K562 (cell line): ENCODE measurements at regions of chr5 and their contacts with region 1.

Region 1: DNA sequence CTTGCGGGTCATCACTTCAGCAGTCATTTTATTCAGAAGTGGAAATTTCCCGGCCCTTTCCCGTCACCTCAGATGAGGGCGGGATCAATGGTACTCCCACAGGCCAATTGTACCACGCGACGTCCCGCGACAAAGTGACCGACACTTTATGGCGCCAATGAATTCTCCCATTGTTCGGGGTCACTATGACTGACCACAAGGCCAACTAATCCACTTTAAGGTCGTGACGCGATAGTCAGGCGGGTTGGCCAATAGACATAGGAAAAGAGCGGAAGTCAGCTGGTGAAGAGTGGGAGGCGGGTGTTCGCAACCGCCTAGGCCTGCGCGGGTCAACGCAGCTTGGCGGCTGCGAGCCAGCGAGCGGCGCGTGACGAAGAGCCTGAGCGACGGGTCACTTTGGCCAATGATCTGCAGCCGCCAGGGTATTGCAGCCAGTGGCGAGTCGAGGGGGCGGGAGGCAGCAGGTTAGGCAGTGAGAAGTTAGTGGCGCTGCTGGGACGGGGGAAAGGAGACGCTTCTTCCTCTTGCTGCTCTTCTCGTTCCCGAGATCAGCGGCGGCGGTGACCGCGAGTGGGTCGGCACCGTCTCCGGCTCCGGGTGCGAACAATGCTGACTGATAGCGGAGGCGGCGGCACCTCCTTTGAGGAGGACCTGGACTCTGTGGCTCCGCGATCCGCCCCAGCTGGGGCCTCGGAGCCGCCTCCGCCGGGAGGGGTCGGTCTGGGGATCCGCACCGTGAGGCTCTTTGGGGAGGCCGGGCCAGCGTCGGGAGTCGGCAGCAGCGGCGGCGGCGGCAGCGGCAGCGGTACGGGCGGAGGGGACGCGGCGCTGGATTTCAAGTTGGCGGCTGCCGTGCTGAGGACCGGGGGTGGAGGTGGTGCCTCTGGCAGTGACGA is at the start of gene ANKHD1:
- DNase-seq: peak; percentile 91 to 100 (median 94)
- ATAC-seq: peak; percentile 83
- H3K4me3 ChIP-seq: peak within 1 kb of the TSS; percentile 100
- H3K27ac ChIP-seq: peak within 1 kb of the TSS; percentile 97
- H3K4me1 ChIP-seq: peaks cover 12 to 18% of the 10 kb centered on the region in 2 experiments; a peak in 4 of 5 replicates
- H3K27me3 ChIP-seq: no peaks in the 10 kb centered on the region
- CTCF ChIP-seq: peak in 1 of 3 experiments; percentile 15; a peak in 1 of 6 replicates
- EP300 ChIP-seq: no peak
- POLR2A ChIP-seq: peak; percentile 90
- RAD21 ChIP-seq: no peak; a peak in 1 of 4 replicates
- polyA plus RNA-seq, gene ANKHD1: 38.9 to 39.0 TPM

Region 2: GRCh38 chr5:140295414-140295813 is 106.2 kb before region 1 on chr5:
- CTCF ChIA-PET with region 1: no interaction called
- POLR2A ChIA-PET with region 1: no interaction called
- in situ Hi-C with region 1: no loop called
- intact Hi-C with region 1: no loop called
- DNase-seq: peak in 1 of 4 experiments; percentile 71
- ATAC-seq: peak; percentile 73
- H3K4me3 ChIP-seq: no peak overlapping the region
- H3K27ac ChIP-seq: no peak overlapping the region
- H3K4me1 ChIP-seq: peaks cover 0 to 9% of the 10 kb centered on the region in 2 experiments; a peak in 3 of 5 replicates
- H3K27me3 ChIP-seq: no peaks in the 10 kb centered on the region
- CTCF ChIP-seq: no peak
- EP300 ChIP-seq: no peak
- POLR2A ChIP-seq: no peak
- RAD21 ChIP-seq: peak in 1 of 2 experiments; percentile 20; a peak in 1 of 4 replicates

Region 3: DNA sequence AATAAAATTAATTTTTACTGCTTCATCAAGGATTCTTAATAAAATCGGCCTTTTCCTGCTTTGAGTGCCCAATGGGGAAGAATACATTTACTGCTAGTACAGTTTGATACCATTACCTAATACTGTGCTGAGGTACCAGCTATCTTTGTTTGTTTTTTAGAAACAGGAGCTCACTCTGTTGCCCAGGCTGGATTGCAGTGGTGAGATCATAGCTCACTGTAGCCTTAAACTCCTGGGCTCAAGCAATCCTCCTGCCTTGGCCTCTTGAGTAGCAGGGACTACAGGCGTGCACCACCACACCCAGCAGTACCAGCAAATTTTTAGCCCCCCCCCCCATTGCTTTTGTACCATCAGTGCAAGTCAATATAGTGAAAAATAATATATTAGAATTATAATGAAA is 13.6 kb before region 1 on chr5:
- CTCF ChIA-PET with region 1: no interaction called
- POLR2A ChIA-PET with region 1: interaction called, 14 read pairs
- in situ Hi-C with region 1: no loop called
- intact Hi-C with region 1: no loop called
- DNase-seq: no peak
- ATAC-seq: no peak
- H3K4me3 ChIP-seq: no peak overlapping the region
- H3K27ac ChIP-seq: no peak overlapping the region
- H3K4me1 ChIP-seq: no peaks in the 10 kb centered on the region; a peak in 1 of 5 replicates
- H3K27me3 ChIP-seq: no peaks in the 10 kb centered on the region
- CTCF ChIP-seq: no peak
- EP300 ChIP-seq: no peak
- POLR2A ChIP-seq: no peak
- RAD21 ChIP-seq: no peak

Region 4: DNA sequence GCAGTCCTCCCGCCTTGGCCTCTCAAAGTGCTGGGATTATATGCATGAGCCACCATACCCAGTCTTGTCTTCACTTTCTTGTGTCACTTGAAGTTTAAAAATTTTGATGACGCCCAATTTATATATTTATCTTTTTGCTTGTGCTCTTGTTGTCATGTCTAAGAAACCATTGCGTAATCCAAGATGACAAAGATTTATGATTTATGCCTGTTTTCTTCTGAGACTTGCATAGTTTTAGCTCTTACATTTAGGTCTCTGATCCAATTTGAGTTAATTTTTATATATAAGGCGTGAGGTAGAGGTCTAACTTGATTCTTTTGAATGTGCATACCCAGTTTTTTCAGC is 18.6 kb after region 1 on chr5:
- CTCF ChIA-PET with region 1: no interaction called
- POLR2A ChIA-PET with region 1: interaction called, 18 read pairs
- in situ Hi-C with region 1: no loop called
- intact Hi-C with region 1: no loop called
- DNase-seq: no peak
- ATAC-seq: no peak
- H3K4me3 ChIP-seq: no peak overlapping the region
- H3K27ac ChIP-seq: no peak overlapping the region
- H3K4me1 ChIP-seq: peaks cover 10 to 11% of the 10 kb centered on the region in 2 experiments; a peak in 3 of 5 replicates
- H3K27me3 ChIP-seq: no peaks in the 10 kb centered on the region
- CTCF ChIP-seq: no peak
- EP300 ChIP-seq: no peak
- POLR2A ChIP-seq: no peak
- RAD21 ChIP-seq: no peak

Region 5: DNA sequence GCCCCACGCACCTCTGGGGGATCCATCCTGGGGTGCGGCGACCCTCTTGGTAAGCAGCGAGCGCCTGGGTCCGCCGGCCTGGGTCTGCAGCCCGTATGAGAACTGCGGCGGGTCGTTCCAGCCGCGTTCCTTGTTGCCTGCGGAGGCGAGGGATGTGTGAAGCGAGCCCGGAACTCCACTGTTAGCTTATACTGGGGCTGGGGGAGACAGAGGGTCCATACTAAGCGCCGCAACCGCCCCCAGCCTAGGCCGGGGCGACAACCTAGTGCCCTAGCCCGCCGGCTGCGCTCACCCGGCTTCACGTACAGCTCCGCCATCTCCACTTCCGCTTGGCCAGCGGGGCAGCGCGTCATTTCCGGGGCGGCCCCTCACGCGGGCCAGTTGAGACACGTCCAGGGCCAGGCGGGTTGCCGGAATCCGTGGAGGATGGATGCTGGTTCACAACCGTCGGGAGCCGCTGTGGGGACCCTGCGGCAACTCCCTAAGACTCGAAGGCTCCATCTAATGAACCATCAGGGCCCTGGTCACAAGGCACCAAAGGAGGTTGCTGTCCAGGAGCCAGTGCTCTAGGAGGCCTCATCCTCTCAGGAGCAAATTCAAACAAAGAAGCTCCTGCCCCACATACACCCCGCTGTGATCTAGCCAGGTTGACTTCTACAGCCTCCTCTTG is 155.7 kb after region 1 on chr5 and contains the start of gene SRA1:
- CTCF ChIA-PET with region 1: no interaction called
- POLR2A ChIA-PET with region 1: interaction called, 6 read pairs
- in situ Hi-C with region 1: no loop called
- intact Hi-C with region 1: loop called (anchors 5 kb)
- DNase-seq: peak; percentile 83 to 95 (median 91)
- ATAC-seq: peak; percentile 94
- H3K4me3 ChIP-seq: peak within 1 kb of the TSS; percentile 77
- H3K27ac ChIP-seq: peak within 1 kb of the TSS; percentile 86
- H3K4me1 ChIP-seq: peaks cover 23 to 27% of the 10 kb centered on the region in 2 experiments
- H3K27me3 ChIP-seq: no peaks in the 10 kb centered on the region
- CTCF ChIP-seq: peak in 1 of 3 experiments; percentile 13; a peak in 1 of 6 replicates
- EP300 ChIP-seq: no peak
- POLR2A ChIP-seq: peak; percentile 96
- RAD21 ChIP-seq: no peak
- polyA plus RNA-seq, gene SRA1: 24.1 to 33.6 TPM

Region 6: DNA sequence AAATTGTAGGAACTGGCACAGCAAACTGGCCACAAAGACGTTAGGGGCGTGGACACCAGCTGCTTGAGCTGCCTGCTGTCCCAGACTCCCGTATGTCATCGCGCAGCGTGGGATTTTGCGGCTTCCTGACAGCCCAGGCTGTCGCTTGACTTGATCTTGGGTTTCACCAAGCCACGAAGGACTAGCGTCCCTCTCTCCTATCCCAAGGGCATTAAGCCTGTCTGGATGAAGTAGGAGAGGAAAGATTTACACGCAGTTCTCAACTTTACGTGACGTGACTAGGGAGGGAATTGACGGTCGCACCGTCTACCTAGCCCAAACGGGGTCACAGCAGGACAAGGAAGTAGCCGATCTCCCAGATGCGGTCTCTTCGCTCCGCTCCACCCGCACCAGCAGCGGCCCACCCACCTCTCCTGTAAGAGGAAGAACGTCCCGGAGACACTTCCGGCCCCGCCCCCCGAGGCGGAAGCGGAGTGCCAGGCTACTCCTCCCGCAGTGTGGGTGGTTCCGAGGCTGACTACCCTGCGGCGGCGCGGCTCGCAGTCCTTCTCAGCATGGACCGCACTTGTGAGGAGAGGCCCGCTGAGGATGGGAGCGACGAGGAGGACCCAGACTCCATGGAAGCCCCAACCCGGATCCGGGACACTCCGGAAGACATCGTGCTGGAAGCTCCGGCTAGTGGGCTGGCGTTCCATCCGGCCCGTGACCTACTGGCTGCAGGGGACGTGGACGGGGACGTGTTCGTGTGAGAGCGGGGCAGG is 262.9 kb after region 1 on chr5 and contains the start of gene WDR55:
- CTCF ChIA-PET with region 1: no interaction called
- POLR2A ChIA-PET with region 1: no interaction called
- in situ Hi-C with region 1: no loop called
- intact Hi-C with region 1: loop called (anchors 2 kb)
- DNase-seq: peak; percentile 92 to 98 (median 94)
- ATAC-seq: peak; percentile 98
- H3K4me3 ChIP-seq: peak within 1 kb of the TSS; percentile 92
- H3K27ac ChIP-seq: peak within 1 kb of the TSS; percentile 91
- H3K4me1 ChIP-seq: peaks cover 10 to 14% of the 10 kb centered on the region in 2 experiments; a peak in 4 of 5 replicates
- H3K27me3 ChIP-seq: no peaks in the 10 kb centered on the region
- CTCF ChIP-seq: 0 out of 6 replicates have a peak, but pooled peaks of 1 of the 3 experiments have one; percentile 5
- EP300 ChIP-seq: 0 out of 2 replicates have a peak, but pooled peaks have one; percentile 3
- POLR2A ChIP-seq: peak; percentile 92
- RAD21 ChIP-seq: peak; percentile 6 to 9; a peak in 1 of 4 replicates
- polyA plus RNA-seq, gene WDR55: 5.2 to 6.6 TPM